ENCODE measurements at regions of chr10 and their contacts with region 1.

Region 1: GRCh38 chr10:116385994-116386809 is 41.4 kb upstream of the PNLIPRP3 start:
- DNase-seq: no peak
- ATAC-seq: no peak
- H3K4me3 Mint-ChIP-seq: no peak overlapping the region
- H3K27ac Mint-ChIP-seq: no peak overlapping the region
- H3K4me1 Mint-ChIP-seq: no peaks in the 10 kb centered on the region
- H3K27me3 Mint-ChIP-seq: no peaks in the 10 kb centered on the region
- CTCF ChIP-seq: no peak

Region 2: DNA sequence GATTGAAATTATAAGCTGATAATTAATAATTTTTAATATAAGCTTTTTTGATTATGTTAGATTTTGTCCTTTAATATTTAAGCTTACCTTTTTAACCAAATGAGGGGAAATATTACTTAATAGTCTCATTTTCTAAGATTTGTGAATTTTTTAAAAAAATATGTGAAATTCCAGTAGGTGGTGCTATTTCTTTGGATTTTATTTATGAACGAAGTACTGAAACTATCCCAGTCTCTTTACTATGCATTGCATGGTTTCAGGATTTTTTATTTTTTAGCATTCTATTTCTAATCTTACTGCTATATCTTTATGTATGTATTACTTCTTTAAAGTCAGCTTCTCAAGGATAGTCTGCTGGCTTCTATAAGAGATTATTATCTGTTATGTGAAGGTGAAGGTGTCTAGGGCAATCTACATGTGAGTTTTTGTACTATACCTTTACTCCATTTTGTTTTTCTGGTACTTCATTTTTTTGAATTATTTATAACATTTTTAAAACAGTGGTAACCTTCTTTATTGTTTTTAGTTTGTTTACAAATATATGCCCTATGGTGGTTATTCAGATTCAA is 1214.7 kb before region 1 on chr10:
- CTCF ChIA-PET with region 1: interaction called, 5 read pairs
- POLR2A ChIA-PET with region 1: no interaction called
- intact Hi-C with region 1: loop called (anchors 2 kb)
- DNase-seq: no peak
- ATAC-seq: no peak
- H3K4me3 Mint-ChIP-seq: no peak overlapping the region
- H3K27ac Mint-ChIP-seq: no peak overlapping the region
- H3K4me1 Mint-ChIP-seq: no peaks in the 10 kb centered on the region
- H3K27me3 Mint-ChIP-seq: no peaks in the 10 kb centered on the region
- CTCF ChIP-seq: no peak

Region 3: GRCh38 chr10:115795964-115796363 is 590.2 kb before region 1 on chr10:
- CTCF ChIA-PET with region 1: no interaction called
- POLR2A ChIA-PET with region 1: no interaction called
- intact Hi-C with region 1: loop called (anchors 5 kb)
- DNase-seq: no peak
- ATAC-seq: no peak
- H3K4me3 Mint-ChIP-seq: no peak overlapping the region
- H3K27ac Mint-ChIP-seq: no peak overlapping the region
- H3K4me1 Mint-ChIP-seq: no peaks in the 10 kb centered on the region
- H3K27me3 Mint-ChIP-seq: no peaks in the 10 kb centered on the region
- CTCF ChIP-seq: no peak

Region 4: DNA sequence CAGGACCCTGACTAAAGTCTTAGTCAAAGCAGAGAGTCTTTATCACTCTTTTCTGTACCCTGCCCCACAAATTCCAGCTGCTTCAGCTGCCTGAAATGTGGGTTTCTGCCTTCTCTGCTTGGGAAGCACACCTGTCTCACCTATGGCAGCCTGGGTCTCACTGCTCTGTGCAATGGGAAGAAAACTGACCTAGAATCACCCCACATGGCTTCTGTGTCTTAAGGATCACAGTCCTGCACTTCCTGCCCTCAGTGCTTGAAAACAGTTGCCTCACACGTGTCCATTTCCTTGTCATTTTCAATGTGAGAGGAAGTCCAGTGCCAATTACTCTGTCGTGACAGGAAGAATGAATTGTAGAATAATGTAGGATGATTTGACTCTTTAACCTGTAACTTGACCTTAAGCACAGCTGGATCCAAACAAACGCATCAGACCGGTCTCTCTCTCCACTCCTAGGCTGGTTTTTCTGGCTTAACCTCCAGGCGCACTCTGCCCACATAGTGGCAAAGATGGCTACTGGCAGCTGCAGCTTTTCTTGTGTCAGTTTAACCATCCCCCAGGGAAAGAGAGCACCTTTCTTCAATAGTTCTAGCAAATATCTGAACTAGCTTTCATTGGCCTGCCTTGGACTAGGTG is 11.9 kb after region 1 on chr10:
- CTCF ChIA-PET with region 1: no interaction called
- POLR2A ChIA-PET with region 1: no interaction called
- intact Hi-C with region 1: no loop called
- DNase-seq: no peak
- ATAC-seq: no peak
- H3K4me3 Mint-ChIP-seq: no peak overlapping the region
- H3K27ac Mint-ChIP-seq: no peak overlapping the region
- H3K4me1 Mint-ChIP-seq: no peaks in the 10 kb centered on the region
- H3K27me3 Mint-ChIP-seq: no peaks in the 10 kb centered on the region
- CTCF ChIP-seq: no peak

Region 5: GRCh38 chr10:116748041-116748440 is 361.8 kb after region 1 on chr10:
- CTCF ChIA-PET with region 1: no interaction called
- POLR2A ChIA-PET with region 1: no interaction called
- intact Hi-C with region 1: no loop called
- DNase-seq: no peak
- ATAC-seq: no peak
- H3K4me3 Mint-ChIP-seq: no peak overlapping the region
- H3K27ac Mint-ChIP-seq: no peak overlapping the region
- H3K4me1 Mint-ChIP-seq: peaks cover 5% of the 10 kb centered on the region
- H3K27me3 Mint-ChIP-seq: peaks cover 41% of the 10 kb centered on the region
- CTCF ChIP-seq: no peak

Region 6: GRCh38 chr10:116787893-116788665 is 401.9 kb after region 1 on chr10:
- CTCF ChIA-PET with region 1: no interaction called
- POLR2A ChIA-PET with region 1: no interaction called
- intact Hi-C with region 1: no loop called
- DNase-seq: peak; percentile 49
- ATAC-seq: peak; percentile 82
- H3K4me3 Mint-ChIP-seq: peak overlapping the region; percentile 46
- H3K27ac Mint-ChIP-seq: no peak overlapping the region
- H3K4me1 Mint-ChIP-seq: peaks cover 12% of the 10 kb centered on the region
- H3K27me3 Mint-ChIP-seq: peaks cover 20% of the 10 kb centered on the region
- CTCF ChIP-seq: peak; percentile 96